Esophagus squamous epithelium (tissue), 5 donors: ENCODE measurements at regions of chr16 and their contacts with region 1.

Region 1: DNA sequence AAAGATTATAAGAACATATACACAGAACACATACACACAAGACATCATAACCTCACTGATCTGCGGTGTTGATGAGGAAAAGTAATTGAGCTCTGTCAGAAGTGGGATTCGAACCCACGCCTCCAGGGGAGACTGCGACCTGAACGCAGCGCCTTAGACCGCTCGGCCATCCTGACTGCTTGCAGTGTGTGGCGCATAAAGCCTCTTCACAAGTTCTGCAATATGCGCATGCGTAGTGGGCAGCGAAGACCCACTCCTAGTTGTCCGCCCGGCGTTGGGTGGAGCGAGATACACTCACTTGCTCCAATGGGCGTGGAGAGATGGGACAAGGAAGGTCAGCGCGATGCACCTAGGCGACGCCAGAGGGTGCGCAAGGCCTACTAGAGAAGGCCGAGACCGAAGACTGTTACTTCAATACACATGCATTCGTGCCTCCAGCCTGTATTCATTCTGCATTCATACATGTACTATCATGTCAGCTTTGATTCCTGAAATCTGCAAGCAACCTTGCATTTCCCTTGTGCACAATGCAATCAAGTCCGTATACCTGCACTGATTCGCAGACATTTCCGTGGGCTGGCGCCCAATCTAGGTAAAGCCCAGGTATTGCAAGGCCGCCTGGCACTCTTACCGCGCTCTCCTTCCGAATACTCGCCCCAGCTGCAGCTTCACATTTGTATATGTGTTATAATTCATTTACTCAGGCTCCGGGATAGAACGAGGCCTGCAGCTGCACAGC is 16.1 kb upstream of the PLLP start:
- DNase-seq: peak; percentile 92
- H3K4me3 ChIP-seq: peak overlapping the region; percentile 20 to 61 (median 52)
- H3K27ac ChIP-seq: peak overlapping the region; percentile 75 to 96 (median 92)
- H3K4me1 ChIP-seq: peaks cover 12 to 49% (median 24%) of the 10 kb centered on the region in 3 donors
- H3K27me3 ChIP-seq: no peaks in the 10 kb centered on the region
- CTCF ChIP-seq: peak; percentile 88 to 99 (median 98)
- POLR2A ChIP-seq: peak in 1 of 4 donors; percentile 80

Region 2: DNA sequence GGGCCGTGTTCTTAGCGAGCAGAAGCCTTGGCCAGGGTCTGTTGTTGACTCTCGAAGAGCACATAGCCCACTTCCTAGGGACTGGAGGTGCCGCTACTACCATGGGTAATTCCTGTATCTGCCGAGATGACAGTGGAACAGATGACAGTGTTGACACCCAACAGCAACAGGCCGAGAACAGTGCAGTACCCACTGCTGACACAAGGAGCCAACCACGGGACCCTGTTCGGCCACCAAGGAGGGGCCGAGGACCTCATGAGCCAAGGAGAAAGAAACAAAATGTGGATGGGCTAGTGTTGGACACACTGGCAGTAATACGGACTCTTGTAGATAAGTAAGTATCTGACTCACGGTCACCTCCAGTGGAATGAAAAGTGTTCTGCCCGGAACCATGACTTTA is 95.9 kb before region 1 on chr16:
- intact Hi-C with region 1: no loop called
- DNase-seq: no peak
- H3K4me3 ChIP-seq: no peak overlapping the region
- H3K27ac ChIP-seq: no peak overlapping the region
- H3K4me1 ChIP-seq: no peaks in the 10 kb centered on the region
- H3K27me3 ChIP-seq: no peaks in the 10 kb centered on the region
- CTCF ChIP-seq: no peak
- POLR2A ChIP-seq: no peak

Region 3: DNA sequence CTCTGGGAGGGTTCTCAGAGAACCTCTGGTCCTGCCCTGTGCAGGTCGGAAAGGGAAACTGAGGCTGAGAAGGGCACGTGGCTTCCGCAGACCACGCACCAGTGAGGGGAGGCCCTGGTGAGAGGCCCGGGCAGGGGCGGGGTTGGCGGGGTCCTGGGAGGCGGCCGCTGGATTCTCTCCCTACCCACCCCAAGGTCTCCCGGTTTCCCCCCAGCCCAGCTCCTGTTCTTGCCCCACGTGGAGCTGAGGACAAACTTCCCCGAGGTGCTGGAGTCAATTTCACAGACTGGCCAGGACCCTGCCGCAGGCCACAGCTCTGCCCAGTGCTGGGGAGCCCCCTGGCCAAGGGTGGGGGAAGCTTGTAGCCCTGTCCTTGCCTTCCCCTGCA is 115.6 kb after region 1 on chr16:
- intact Hi-C with region 1: loop called (anchors 2 kb)
- DNase-seq: no peak
- H3K4me3 ChIP-seq: no peak overlapping the region
- H3K27ac ChIP-seq: peak overlapping the region in 1 of 4 donors; percentile 70
- H3K4me1 ChIP-seq: peaks cover 21 to 45% (median 25%) of the 10 kb centered on the region in 3 donors
- H3K27me3 ChIP-seq: no peaks in the 10 kb centered on the region
- CTCF ChIP-seq: no peak
- POLR2A ChIP-seq: no peak

Region 4: DNA sequence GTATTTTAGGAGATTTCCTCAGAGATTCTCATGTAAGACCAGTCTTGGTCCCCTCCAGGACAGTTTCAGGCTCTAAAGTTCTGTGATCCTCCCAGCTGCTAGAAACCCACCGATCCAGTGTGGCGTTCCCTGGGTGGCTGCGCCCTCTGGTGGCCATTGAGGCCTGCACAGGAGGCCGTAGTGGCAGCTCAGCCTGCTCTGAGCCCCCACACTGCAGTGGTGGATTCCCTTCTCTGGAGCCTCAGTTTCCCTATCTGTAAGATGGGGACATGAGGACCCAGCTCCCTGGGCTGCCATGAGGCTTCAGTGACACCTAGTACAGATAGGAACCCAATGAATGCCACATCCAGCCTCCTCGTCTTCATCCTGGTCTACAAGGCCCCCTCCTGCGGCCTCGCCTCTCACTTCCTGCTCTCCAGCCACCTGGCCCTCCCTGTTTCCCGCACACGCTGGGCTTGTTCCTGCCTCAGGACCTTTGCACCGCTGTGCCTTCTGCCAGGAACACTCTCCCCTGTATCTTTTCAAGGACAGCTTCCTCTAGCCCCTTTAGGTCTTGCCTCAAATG is 219.3 kb after region 1 on chr16:
- intact Hi-C with region 1: loop called (anchors 10 kb)
- DNase-seq: no peak
- H3K4me3 ChIP-seq: no peak overlapping the region
- H3K27ac ChIP-seq: no peak overlapping the region
- H3K4me1 ChIP-seq: peaks cover 3 to 8% (median 5%) of the 10 kb centered on the region in 3 donors
- H3K27me3 ChIP-seq: no peaks in the 10 kb centered on the region
- CTCF ChIP-seq: peak; percentile 90 to 96 (median 92)
- POLR2A ChIP-seq: no peak